ENCODE measurements at regions of chr2 and their contacts with region 1.

Region 1: GRCh38 chr2:119659601-119660342 is 19.2 kb upstream of the TMEM177 start:
- DNase-seq: peak in 5 of 10 donors; percentile 22 to 87 (median 57)

Region 2: GRCh38 chr2:119011162-119011909 is 648.4 kb before region 1 on chr2:
- intact Hi-C with region 1: loop called (anchors 10 kb)
- DNase-seq: peak; percentile 27 to 95 (median 62)

Region 3: DNA sequence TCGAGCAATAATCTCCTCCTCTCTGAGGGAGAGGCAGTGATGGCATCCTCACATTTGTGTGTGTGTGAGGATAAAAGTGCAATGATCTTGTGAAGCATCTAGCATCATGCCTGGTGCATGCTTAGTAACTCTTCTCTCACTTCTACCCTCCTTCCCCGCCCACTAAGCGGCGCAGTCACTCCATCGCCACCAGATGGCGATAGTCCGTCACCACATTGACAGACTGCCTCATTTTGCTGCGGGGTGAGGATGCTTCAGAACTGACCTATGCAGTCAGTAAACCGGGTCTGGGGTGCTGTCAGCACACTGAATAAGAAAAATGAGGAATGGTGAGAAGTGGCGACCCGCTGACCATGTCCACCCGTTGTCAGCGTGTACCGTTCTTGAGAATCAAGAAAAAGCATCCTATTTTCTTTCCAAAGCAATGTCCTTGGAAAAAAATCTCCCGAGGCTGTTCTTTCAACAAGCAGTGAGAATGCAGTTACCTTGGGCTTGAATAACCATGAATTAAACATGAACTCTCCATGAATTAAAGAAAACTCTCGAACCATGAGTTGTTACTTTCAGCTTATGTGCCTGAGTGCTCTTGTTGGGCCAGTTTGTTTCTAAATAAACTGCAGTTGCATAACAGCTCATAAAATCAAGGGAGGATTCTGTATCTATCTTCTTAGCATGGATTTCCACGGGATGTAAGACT is 18.1 kb before region 1 on chr2:
- intact Hi-C with region 1: loop called (anchors 2 kb)
- DNase-seq: peak; percentile 63 to 97 (median 84)

Measured in posterior cingulate gyrus (tissue), 11 donors.